ENCODE measurements at regions of chr2 and their contacts with region 1.

Region 1: DNA sequence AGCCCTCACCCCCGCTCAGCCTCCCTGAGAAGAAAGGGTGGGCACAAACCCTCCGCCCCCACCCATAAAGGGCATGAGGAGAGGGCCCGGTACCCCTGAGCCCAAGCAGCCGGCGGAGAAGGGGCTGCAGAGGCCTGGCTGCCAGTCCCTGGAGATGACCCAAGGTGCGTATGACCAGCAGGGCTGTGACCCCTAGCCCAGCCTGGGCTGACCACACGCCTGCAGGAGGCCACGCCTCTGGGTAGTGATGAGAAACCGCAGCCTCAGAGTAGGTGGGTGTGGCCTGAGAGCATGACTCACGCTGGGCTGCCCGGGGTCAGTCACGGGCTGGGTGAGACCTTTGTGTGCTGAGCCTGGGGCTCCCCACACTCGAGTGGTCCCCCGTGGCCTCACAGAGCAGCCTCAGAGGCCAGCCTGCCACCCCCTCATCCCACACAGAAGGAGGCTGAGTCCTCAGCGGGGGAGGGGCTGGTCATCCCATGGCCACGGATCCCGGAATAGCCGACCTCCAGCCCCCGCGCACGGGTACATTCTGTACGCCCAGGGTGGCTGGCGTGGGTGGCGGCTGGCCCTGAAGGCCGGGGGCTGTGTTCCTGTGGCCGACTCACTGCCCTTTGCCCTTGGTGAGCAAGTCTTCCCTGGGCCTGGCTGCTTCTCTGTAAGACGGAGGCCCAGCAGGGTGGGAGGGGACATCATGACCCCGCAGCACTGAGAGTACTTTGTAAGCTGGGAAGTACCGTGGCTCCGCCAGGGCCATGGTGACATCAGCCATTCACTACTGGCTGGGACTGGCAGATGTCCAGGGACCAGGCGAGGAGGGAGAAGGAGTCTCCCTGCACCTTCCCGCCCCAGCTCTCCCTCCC is 110.8 kb upstream of the OTOS start:
- DNase-seq: peak; percentile 97

Region 2: DNA sequence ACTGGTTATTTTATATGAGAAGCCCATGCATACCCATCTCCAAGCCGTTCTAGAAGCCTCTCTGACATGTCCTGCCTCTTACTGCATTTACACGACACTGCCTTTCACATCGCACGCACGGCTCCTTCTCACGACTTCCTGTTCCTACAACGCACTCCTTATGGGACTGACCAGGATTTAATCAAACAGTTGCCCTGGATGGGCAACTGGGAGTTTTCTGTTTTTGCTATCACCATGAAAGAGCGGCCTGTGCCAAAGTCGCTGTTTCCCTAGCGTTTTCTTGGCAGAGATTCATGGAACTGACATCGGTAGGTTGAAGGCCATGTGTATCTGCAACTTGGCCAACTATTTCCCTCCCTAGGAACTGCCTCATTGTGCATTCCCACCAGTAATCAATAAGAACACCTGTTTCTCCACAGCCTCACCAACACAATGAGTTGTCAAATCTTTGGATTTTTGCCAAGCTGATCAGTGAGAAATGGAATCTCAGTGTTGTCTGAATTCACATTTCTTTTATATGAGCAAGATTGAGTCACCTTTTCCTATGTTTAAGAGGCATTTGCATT is 13.5 kb before region 1 on chr2:
- intact Hi-C with region 1: no loop called
- DNase-seq: no peak

Region 3: DNA sequence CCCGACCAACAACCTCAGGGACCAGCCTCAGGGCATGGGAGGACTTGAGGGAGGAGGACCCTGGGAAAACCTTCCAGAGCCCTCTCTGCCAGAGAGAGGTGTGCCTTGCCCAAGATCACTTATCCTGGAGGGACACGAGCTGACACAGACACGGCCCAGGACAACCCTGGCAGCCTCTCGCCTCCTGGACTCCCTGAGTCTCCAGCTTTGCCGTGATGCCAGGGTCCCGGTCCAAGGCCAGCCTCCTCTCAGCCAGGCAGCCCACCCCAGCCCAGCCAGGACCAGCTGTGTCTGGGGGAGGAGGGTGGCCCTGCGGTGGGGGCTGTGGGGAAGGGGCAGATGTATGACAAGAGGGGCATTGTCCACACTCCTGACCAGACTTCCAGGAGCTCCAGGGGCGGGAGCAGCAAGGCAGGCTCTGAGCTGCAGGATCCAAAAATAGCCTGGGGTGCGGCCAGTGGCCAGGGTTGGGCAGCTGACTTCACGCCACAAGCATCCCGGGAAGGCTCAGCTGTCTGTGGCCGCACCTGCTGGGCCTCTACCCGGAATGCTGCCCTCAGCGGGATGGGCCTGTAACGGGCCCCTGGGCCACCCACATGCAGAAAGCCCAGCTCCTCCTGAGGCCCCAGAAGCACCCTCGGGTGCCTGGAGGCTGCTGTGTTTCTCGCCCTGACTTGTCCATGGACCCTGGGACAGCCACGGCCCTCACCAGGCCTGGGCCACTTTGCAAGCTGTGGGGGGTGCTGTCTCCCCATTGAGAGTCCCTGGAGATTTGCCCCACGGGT is 118.8 kb after region 1 on chr2:
- intact Hi-C with region 1: loop called in 1 of 2 experiments (anchors 10 kb)
- DNase-seq: peak; percentile 91